Heart right ventricle (tissue), 16 donors: ENCODE measurements at regions of chr7 and their contacts with region 1.

Region 1: DNA sequence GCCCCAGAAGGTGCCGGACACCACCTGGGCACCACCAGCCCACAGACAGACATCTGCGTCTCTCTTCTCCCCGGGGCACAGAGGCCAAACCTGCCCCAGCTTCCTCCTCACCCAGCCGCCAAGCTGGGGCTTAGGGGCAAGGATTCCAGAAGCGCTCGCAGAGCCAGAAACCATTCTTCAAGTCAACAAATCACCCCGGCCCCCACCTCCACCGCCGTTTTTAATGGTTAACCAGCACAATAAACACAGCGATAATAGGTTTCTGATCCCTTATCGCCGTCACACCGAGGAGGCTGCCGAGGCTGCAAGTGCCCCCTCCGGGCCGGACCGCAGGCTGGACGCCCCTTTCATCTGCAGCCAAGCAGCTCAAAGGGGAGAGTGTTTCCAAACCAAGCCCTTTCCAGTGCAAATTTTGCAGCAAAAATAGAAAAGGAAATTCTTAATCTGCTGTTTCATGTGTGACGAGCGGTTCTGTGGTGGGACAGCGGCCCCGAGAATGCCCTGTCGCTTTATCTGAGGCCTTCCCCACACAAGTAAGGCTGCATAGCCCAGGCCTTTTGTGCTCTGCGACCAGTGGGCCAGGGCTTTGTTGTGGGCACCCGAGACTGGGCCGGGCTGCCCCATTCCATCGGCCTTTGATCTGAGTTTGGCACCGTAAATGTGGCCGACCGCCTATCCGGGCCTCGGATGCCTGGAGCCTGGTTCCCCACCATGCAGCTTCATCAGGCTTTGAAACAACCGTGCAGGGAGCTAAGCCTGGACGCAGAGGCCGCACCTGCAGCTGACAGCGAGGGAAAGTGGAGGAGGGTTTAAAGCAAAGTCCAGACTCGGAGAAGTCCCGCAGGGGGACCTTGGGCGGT is 83.2 kb downstream of the FOXL3 start:
- DNase-seq: no peak
- ATAC-seq: no peak
- H3K4me3 ChIP-seq: no peak overlapping the region
- H3K27ac ChIP-seq: no peak overlapping the region
- H3K4me1 ChIP-seq: no peaks in the 10 kb centered on the region
- H3K27me3 ChIP-seq: peaks cover 0 to 40% (median 28%) of the 10 kb centered on the region in 7 donors
- CTCF ChIP-seq: no peak

Region 2: DNA sequence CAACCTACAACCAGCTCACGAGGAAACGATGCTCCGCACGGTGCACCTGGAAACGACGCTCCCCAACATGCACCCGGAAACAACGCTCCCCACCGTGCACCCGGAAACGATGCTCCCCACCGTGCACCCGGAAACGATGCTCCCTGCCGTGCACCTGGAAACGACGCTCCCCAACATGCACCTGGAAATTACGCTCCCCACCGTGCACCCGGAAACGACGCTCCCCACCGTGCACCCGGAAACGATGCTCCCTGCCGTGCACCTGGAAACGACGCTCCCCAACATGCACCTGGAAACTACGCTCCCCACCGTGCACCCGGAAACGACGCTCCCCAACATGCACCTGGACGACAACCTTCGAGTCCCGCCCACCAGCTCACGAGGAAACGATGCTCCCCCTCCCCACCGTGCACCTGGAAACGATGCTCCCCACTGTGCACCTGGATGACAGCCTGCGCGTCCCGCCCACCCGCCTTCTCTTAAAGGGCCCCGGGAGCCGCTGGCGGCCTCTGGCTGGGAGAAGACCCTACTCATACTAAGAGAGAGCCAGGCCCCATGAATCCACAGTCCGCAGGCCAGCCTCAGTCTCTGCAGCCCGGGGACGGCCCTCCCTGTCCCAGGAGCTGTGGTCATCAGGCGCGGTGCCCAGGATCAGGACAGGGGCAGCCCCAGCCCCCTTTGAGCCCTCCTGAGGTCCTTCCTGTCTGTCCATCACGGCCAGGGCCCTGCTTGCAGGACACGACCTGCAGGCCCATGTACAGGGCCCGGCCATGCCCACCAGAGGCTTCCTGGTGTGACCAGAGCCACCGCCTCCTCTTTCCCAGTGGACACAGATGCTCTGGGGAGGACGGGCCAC is 48.2 kb after region 1 on chr7:
- intact Hi-C with region 1: loop called in 1 of 10 experiments (anchors 1 kb)
- DNase-seq: no peak
- ATAC-seq: no peak
- H3K4me3 ChIP-seq: no peak overlapping the region
- H3K27ac ChIP-seq: no peak overlapping the region
- H3K4me1 ChIP-seq: peaks cover 0 to 14% (median 8%) of the 10 kb centered on the region in 9 donors
- H3K27me3 ChIP-seq: peaks cover 0 to 21% (median 0%) of the 10 kb centered on the region in 7 donors
- CTCF ChIP-seq: no peak

Region 3: GRCh38 chr7:484356-485101 is 111.4 kb after region 1 on chr7:
- intact Hi-C with region 1: no loop called
- DNase-seq: no peak
- ATAC-seq: no peak
- H3K4me3 ChIP-seq: no peak overlapping the region
- H3K27ac ChIP-seq: no peak overlapping the region
- H3K4me1 ChIP-seq: peaks cover 0 to 19% (median 0%) of the 10 kb centered on the region in 9 donors
- H3K27me3 ChIP-seq: peaks cover 0 to 39% (median 23%) of the 10 kb centered on the region in 7 donors
- CTCF ChIP-seq: no peak